CD8-positive, alpha-beta memory T cell (primary cell): ENCODE measurements at regions of chr10 and their contacts with region 1.

Region 1: DNA sequence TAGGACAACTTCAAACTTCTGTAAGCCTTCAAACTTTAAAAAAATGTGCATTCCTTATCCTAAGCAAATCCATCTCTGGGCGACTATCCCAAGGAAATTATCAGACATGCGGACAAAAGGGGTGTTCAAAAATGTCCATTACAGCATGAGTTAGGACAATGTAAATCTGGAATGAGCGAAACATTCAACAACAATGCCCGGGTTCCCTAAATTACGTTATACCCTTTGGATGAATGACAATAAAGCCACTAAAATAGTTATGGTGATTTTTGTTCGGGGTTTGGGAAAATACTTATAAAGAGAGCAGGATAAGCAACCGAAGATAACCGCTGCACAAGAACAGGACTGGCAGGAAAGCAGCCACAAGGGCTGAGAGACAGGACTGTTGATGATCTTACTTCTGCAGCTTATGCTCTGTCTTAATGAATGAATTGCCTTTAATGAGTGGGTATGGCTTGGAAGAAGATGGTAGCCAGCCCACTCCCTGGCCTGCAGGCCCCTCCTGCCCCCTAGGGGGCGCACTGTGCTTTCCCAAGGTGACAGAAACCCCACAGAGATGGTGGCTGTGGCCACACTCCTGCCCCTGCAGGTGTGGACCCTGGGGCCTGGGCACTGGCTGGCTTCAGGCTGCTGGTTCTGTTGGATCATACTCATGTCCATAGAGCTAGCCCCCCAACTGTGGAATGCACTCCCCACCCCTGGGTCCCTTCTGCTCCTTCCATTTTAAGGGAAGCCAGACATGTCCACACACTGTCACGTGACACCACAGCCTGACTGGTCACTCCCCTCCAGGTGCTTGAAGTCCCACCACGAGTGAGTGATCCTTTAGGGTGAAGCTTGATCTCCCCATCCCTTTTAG is 45.0 kb downstream of the ZCCHC24 start:
- DNase-seq: peak; percentile 11 to 65 (median 28)
- H3K4me3 ChIP-seq: no peak overlapping the region
- H3K4me3 Mint-ChIP-seq: no peak overlapping the region
- H3K27ac ChIP-seq: no peak overlapping the region
- H3K27ac Mint-ChIP-seq: peak overlapping the region in 1 of 8 donors; percentile 38
- H3K4me1 ChIP-seq: no peaks in the 10 kb centered on the region
- H3K4me1 Mint-ChIP-seq: no peaks in the 10 kb centered on the region
- H3K27me3 ChIP-seq: no peaks in the 10 kb centered on the region
- H3K27me3 Mint-ChIP-seq: peaks cover 0 to 2% of the 10 kb centered on the region in 2 donors

Region 2: DNA sequence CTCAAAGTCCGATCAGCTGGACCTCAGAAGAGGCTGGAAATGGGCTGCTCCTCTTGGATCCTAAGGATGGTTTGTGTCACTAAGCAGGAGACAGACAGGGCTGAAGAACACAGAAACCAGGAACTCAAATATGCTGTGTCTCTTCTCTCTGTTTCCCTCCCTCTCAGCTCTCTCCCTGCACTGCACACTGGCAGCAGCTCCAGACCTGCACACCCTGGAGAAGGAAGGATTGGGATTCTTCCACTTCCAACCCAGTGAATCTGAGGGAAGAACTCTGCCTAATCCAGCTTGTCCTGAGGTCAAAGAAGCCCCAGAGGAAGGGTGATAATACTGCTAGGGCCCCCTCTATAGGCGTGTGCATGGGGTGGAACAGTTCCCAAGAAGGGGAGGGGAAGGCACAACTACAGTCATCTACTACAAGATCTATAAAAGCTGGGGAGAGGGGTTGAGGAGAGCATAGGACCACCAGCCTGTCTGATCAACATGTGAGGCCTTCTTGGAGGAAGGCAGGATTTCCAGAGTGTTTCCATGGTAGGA is 67.7 kb after region 1 on chr10:
- CTCF ChIA-PET with region 1: interaction called, 17 read pairs
- POLR2A ChIA-PET with region 1: interaction called, 4 read pairs
- DNase-seq: no peak
- H3K4me3 ChIP-seq: no peak overlapping the region
- H3K4me3 Mint-ChIP-seq: no peak overlapping the region
- H3K27ac ChIP-seq: no peak overlapping the region
- H3K27ac Mint-ChIP-seq: peak overlapping the region in 1 of 8 donors; percentile 29
- H3K4me1 ChIP-seq: no peaks in the 10 kb centered on the region
- H3K4me1 Mint-ChIP-seq: no peaks in the 10 kb centered on the region
- H3K27me3 ChIP-seq: no peaks in the 10 kb centered on the region
- H3K27me3 Mint-ChIP-seq: peaks cover 0 to 13% of the 10 kb centered on the region in 2 donors